K562 (cell line): ENCODE measurements at regions of chr12 and their contacts with region 1.

Region 1: DNA sequence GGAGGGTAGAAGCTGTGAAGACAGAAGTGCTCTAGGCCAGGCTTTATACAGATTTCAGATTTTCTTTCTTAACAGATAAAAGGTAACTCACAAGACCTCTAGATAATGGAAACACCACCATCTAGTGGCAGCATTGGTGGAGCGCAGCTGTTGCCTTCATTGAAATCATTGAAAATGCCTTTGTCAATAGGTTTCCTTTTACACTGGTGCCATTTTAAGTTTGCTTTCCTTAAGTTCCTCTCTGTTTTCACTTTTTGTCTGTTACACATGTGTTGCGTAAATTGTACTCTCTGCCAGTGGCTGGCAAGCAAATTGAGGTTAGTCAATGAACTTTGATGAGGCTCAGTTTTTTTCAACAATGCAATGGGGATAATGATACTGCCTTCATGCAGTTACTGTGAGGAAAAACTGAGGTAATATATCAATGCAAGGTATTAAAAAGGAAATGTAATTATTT is 31.1 kb downstream of the ALDH1L2 start:
- DNase-seq: peak; percentile 46 to 74 (median 48)
- ATAC-seq: peak; percentile 85
- H3K4me3 ChIP-seq: no peak overlapping the region
- H3K27ac ChIP-seq: no peak overlapping the region
- H3K4me1 ChIP-seq: no peaks in the 10 kb centered on the region
- H3K27me3 ChIP-seq: no peaks in the 10 kb centered on the region
- CTCF ChIP-seq: peak; percentile 62 to 90 (median 85)
- EP300 ChIP-seq: no peak
- POLR2A ChIP-seq: no peak
- RAD21 ChIP-seq: peak; percentile 75 to 85

Region 2: DNA sequence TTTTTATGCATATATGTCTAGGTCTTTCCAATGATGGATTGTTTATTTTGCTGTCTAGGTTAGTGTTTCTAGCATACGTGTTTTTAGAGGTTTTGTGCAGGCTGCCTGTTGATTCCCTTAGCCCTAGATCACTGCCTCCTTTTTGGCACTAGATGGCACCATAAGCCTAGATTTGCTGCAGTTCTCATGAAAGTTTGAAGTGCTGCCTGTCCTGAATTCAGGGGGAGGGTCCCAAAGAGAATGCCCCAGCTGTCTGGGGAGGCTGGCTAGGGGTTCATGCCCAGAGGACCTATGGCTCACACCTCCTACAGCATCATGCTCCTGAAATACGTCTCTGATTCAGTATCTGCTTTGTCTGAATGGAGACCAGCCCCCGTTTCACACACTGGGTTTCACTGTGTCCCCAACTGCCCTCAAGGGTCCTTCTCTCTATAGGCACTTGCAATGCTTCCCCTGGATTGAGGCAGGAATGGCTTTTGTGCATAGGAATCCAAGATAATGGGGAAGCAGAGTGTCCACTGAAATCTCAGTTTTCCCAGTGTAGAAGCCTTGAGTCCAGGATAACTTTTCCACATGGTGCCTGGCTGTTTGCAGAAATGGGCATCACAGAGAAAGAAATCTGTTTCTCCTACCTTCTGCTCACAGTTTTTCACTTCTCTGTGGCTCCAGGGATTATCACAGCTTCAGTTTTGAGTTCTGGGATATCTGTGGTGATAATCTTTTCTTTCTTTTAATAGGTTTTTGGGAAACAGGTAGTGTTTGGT is 851.7 kb before region 1 on chr12:
- CTCF ChIA-PET with region 1: no interaction called
- POLR2A ChIA-PET with region 1: no interaction called
- in situ Hi-C with region 1: loop called (anchors 25 kb)
- intact Hi-C with region 1: loop called (anchors 5 kb)
- DNase-seq: peak; percentile 61 to 71 (median 63)
- ATAC-seq: peak; percentile 91
- H3K4me3 ChIP-seq: no peak overlapping the region
- H3K27ac ChIP-seq: no peak overlapping the region
- H3K4me1 ChIP-seq: no peaks in the 10 kb centered on the region
- H3K27me3 ChIP-seq: peaks cover 0 to 8% of the 10 kb centered on the region in 2 experiments; a peak in 2 of 5 replicates
- CTCF ChIP-seq: peak; percentile 76 to 90 (median 88)
- EP300 ChIP-seq: no peak
- POLR2A ChIP-seq: no peak
- RAD21 ChIP-seq: peak; percentile 90 to 93

Region 3: DNA sequence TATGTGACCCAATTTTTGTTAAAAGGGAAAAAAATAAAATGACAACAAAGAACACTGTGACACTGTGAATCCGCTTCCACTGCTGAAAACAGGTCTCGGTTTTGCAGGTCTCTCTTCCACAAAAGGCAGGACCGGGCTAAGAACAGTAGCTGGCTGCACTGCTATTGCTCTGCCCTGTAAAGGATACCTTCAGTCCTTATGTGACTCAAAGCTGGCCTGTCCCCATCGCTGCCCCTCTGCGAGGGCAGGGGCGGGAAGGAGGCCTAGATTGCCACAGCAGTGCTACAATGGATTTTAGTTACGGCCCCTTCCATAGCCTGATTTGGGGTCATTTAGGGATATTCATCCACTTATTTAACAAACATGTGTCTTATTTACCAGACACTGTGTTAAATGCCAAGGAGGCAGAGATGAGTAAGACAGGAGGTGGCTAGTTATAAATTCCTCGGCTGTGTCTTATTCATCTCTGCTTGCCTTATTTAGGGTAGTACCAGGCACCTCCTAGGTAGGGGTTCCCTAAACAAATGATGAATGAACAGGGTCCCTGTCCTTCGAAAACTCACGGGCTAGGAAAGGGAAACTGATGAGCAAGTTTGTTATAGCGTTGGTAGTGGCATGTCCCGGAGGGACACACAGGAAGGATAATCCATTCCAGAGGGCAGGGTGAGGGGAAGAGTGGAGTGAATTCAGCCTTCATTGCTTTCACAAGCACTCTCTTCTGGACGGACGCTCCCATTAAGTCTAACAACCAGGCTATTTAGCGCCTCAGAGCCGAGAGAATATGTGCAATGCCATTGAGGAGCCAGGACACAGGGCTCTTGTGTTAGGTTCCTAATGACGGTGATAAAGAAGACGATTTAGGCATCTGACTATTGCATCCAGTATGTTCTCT is 676.2 kb before region 1 on chr12:
- CTCF ChIA-PET with region 1: interaction called, 8 read pairs
- POLR2A ChIA-PET with region 1: no interaction called
- in situ Hi-C with region 1: loop called (anchors 5 kb)
- intact Hi-C with region 1: loop called (anchors 5 kb)
- DNase-seq: no peak
- ATAC-seq: no peak
- H3K4me3 ChIP-seq: no peak overlapping the region
- H3K27ac ChIP-seq: no peak overlapping the region
- H3K4me1 ChIP-seq: peaks cover 2 to 3% of the 10 kb centered on the region in 2 experiments; a peak in 2 of 5 replicates
- H3K27me3 ChIP-seq: peaks cover 0 to 9% of the 10 kb centered on the region in 2 experiments; a peak in 2 of 5 replicates
- CTCF ChIP-seq: no peak
- EP300 ChIP-seq: no peak
- POLR2A ChIP-seq: no peak
- RAD21 ChIP-seq: no peak

Region 4: GRCh38 chr12:104825408-104825807 is 227.7 kb before region 1 on chr12:
- CTCF ChIA-PET with region 1: no interaction called
- POLR2A ChIA-PET with region 1: no interaction called
- in situ Hi-C with region 1: no loop called
- intact Hi-C with region 1: loop called (anchors 10 kb)
- DNase-seq: peak; percentile 25 to 69 (median 32)
- ATAC-seq: peak; percentile 82
- H3K4me3 ChIP-seq: no peak overlapping the region
- H3K27ac ChIP-seq: no peak overlapping the region
- H3K4me1 ChIP-seq: peaks cover 4 to 6% of the 10 kb centered on the region in 2 experiments; a peak in 4 of 5 replicates
- H3K27me3 ChIP-seq: no peaks in the 10 kb centered on the region
- CTCF ChIP-seq: peak; percentile 70 to 79 (median 77)
- EP300 ChIP-seq: no peak
- POLR2A ChIP-seq: no peak
- RAD21 ChIP-seq: peak; percentile 53 to 88

Region 5: DNA sequence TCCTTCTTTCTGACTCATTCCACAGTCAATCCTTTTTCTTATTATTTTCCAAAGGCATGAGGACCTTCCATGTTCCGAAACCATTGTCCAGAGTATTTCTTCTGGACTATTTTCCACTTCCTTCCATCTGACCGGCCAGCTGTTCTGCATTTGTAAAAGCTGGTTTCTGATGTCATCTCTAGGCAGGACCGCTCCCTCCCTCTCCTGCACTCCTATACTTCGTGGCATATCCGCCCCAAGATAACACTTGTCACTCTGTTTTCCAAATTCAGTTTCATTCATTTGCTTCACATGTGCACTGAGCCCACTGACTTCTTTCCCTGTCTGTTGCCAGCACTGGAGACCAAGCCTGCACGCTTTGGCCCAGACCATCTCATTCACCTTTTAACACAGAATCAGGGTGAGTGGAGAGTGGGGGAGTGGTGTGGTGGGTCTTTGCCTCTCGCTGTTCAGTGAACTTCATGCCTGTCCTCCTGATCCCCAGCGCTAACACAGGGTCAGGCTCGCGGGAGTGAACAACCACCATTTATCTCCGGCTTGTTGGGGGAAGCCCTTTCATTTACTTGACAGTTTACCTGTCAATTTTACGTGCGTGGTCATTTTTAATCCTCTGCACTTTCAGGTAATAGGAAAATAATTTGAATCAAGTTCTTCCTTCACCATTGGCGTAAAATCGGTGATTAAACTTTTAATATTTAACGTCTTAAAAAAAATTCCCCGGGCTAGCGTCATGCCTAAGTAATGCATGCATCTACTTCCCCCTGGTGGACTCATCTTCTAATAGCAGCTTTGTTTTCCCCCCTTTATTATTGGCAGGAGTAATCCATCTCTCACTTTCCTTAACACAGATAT is 329.9 kb after region 1 on chr12:
- CTCF ChIA-PET with region 1: no interaction called
- POLR2A ChIA-PET with region 1: no interaction called
- in situ Hi-C with region 1: no loop called
- intact Hi-C with region 1: loop called (anchors 10 kb)
- DNase-seq: peak; percentile 59 to 63 (median 62)
- ATAC-seq: peak; percentile 88
- H3K4me3 ChIP-seq: no peak overlapping the region
- H3K27ac ChIP-seq: no peak overlapping the region
- H3K4me1 ChIP-seq: peaks cover 0 to 5% of the 10 kb centered on the region in 2 experiments; a peak in 1 of 5 replicates
- H3K27me3 ChIP-seq: peaks cover 0 to 24% of the 10 kb centered on the region in 2 experiments; a peak in 4 of 5 replicates
- CTCF ChIP-seq: peak; percentile 66 to 85 (median 76)
- EP300 ChIP-seq: no peak
- POLR2A ChIP-seq: no peak
- RAD21 ChIP-seq: peak; percentile 84 to 86